PC-3 (cell line): ENCODE measurements at regions of chr6 and their contacts with region 1.

Region 1: GRCh38 chr6:148342357-148343046 is at the start of gene SASH1:
- DNase-seq: peak; percentile 75
- ATAC-seq: peak; percentile 81
- H3K4me3 ChIP-seq: peak within 1 kb of the TSS; percentile 78
- H3K27ac ChIP-seq: peak within 1 kb of the TSS; percentile 92
- H3K4me1 ChIP-seq: peaks cover 16% of the 10 kb centered on the region
- H3K27me3 ChIP-seq: no peaks in the 10 kb centered on the region
- CTCF ChIP-seq: no peak
- total RNA-seq, gene SASH1: 9.8 and 10.5 TPM in 2 replicates

Region 2: DNA sequence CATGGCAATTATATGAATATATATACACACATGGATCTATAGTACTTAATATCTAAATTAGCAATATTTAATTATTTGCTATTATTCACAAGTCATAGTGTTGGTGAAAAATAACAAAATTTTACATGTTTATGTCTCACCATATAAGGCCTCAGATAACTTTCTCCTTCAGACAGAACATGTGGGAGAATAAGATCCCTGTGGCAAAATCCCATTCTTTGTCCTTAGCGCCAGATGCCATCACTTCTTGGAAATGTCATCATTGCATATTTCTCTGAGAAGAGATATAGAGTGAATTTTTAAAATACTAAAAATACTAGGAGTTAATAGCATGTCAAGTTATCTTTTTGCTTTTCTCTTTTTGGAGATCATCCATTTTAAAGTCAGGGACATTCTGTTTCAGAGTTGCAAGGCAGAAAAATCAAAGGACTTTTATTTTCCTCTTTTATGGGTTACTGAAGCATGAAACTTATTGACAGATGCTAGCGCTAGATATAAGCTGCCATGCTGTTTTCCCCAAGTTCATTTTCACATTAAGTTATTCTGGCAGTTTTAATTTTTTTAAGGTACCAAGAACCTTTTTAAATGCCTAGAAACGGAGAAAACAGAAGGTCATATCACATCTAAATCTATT is 1168.7 kb before region 1 on chr6:
- CTCF ChIA-PET with region 1: no interaction called
- POLR2A ChIA-PET with region 1: interaction called, 14 read pairs
- intact Hi-C with region 1: no loop called
- DNase-seq: no peak
- ATAC-seq: no peak
- H3K4me3 ChIP-seq: no peak overlapping the region
- H3K27ac ChIP-seq: peak overlapping the region; percentile 27
- H3K4me1 ChIP-seq: peaks cover 23% of the 10 kb centered on the region
- H3K27me3 ChIP-seq: no peaks in the 10 kb centered on the region
- CTCF ChIP-seq: no peak

Region 3: DNA sequence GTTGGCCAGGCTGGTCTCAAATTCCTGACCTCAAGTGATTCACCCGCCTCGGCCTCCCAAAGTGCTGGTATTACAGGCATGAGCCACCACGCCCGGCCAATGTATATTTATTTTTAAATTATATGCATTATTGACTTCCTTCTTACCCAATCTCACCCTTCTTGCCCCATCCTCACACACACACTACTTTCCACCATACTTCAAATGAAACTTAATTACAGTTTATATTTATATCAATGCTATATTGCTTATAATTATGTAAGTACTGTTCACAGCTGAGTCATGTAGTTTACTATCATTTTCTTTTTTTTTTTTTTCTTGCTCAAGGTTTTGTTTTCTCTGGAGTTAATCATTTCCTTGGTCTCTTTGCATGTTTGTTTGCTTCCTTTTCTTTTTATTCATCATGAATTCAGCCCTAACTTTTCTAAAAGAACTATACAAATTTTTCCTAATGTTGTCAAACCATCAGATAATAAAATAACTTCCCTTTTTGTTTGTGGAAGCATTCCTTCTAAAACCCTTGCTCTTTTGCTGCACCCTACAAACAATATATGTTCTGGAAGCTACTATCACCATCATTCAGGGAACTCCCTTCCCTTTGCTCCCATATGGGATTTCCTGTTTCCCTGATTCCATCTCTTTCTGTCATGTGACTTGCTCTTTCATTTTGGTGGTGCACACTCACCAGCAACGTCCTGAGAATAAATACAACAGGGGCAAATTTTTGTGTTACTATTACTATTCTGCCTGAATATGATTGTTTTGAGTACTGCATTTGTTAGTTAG is 201.5 kb before region 1 on chr6:
- CTCF ChIA-PET with region 1: no interaction called
- POLR2A ChIA-PET with region 1: no interaction called
- intact Hi-C with region 1: no loop called
- DNase-seq: peak; percentile 53
- ATAC-seq: peak; percentile 80
- H3K4me3 ChIP-seq: 0 out of 2 replicates have a peak overlapping the region, but pooled peaks have one; percentile 23
- H3K27ac ChIP-seq: peak overlapping the region; percentile 86
- H3K4me1 ChIP-seq: peaks cover 19% of the 10 kb centered on the region
- H3K27me3 ChIP-seq: no peaks in the 10 kb centered on the region
- CTCF ChIP-seq: no peak

Region 4: DNA sequence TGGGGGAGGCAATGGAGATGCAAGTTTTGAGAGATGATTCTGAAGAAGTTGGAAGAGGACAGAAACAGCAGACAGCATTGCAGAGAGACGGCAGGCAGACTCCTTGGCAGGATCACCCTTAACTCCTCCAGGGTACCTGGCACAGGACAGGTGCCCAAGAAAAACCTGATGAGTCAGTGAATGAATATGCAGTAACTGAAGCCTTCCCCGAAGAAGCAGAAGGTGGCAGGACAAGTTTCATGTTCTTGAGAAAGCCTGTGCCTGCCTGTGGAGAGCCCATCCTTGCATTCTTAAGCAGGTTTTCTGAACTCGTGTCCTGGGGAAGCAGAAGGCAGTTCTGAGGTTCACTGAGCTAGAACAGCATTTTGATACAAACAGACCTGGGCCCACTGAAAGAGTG is 79.5 kb before region 1 on chr6:
- CTCF ChIA-PET with region 1: no interaction called
- POLR2A ChIA-PET with region 1: interaction called, 17 read pairs
- intact Hi-C with region 1: loop called (anchors 2 kb)
- DNase-seq: peak; percentile 82
- ATAC-seq: peak; percentile 78
- H3K4me3 ChIP-seq: no peak overlapping the region
- H3K27ac ChIP-seq: no peak overlapping the region
- H3K4me1 ChIP-seq: peaks cover 29% of the 10 kb centered on the region
- H3K27me3 ChIP-seq: no peaks in the 10 kb centered on the region
- CTCF ChIP-seq: no peak

Region 5: DNA sequence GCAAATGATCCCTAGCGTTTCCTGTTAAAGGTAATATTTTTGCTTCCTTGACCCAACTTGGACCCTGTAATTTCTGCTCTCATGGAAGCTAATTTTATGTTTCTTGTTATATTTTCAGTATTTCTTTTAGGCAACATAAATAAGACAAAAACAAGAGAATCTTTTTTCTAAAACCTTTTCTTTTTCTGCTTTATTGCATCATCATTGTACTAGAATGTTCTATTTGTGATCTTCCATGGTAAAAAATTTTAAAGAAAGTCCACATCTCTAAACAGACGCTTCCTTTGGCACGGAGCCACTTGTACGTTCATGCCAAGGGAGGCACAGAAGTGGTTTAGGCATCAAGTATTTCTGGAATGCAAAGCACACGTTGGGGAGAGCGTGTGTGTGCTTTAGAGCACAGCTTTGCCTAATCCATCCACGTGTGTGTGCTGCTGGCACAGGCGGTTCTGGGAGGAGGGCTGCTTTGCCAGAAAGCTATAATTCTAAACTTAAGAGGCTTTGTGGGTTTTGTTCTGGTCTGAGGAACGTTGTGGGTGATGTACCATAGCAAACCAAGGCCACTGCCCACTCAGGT is 98.5 kb after region 1 on chr6:
- CTCF ChIA-PET with region 1: no interaction called
- POLR2A ChIA-PET with region 1: no interaction called
- intact Hi-C with region 1: loop called (anchors 5 kb)
- DNase-seq: peak; percentile 93
- ATAC-seq: peak; percentile 80
- H3K4me3 ChIP-seq: peak overlapping the region; percentile 55; the same call in 1 of the 2 replicates
- H3K27ac ChIP-seq: peak overlapping the region; percentile 99
- H3K4me1 ChIP-seq: peaks cover 40% of the 10 kb centered on the region
- H3K27me3 ChIP-seq: no peaks in the 10 kb centered on the region
- CTCF ChIP-seq: no peak

Region 6: GRCh38 chr6:148524976-148525375 is 182.5 kb after region 1 on chr6:
- CTCF ChIA-PET with region 1: no interaction called
- POLR2A ChIA-PET with region 1: interaction called, 12 read pairs
- intact Hi-C with region 1: no loop called
- DNase-seq: peak; percentile 68
- ATAC-seq: peak; percentile 84
- H3K4me3 ChIP-seq: peak overlapping the region; percentile 69
- H3K27ac ChIP-seq: peak overlapping the region; percentile 98
- H3K4me1 ChIP-seq: peaks cover 25% of the 10 kb centered on the region
- H3K27me3 ChIP-seq: no peaks in the 10 kb centered on the region
- CTCF ChIP-seq: no peak